ENCODE measurements at regions of chr3 and their contacts with region 1.

Region 1: DNA sequence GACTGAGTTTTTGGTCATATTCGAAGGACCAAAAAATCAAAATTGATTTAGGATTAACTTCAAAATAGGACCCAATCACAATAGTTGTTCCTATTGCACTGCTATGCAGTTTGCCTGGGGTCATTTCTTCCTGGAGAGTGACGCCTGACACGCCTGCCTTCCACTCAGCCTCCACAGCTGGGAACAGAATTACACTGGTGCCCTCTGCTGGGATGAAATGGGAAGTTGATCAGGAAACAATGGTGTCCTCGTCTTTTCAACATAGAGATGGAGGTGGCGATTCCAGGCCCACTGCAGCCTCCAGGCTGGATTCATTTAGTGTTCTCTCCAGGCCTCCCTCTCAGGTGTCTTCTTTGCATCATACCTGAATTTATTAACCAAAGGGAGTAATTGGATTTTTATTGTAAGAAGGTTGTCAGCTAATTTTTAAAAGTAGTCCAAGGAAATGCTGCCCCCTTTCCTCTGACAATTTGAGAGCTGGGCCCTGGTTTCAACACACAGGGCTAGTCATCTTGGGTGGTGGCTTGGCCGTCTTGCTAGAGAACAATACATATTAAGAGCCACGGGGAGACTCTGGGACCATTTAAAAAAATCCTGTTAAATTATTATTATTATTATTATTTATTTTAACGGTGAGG is 69.7 kb downstream of the GAP43 start:
- DNase-seq: peak; percentile 92
- H3K4me3 ChIP-seq: no peak overlapping the region
- H3K27ac ChIP-seq: no peak overlapping the region
- H3K4me1 ChIP-seq: peaks cover 4% of the 10 kb centered on the region
- H3K27me3 ChIP-seq: no peaks in the 10 kb centered on the region
- CTCF ChIP-seq: peak; percentile 85

Region 2: GRCh38 chr3:114827495-114827894 is 865.5 kb before region 1 on chr3:
- CTCF ChIA-PET with region 1: no interaction called
- POLR2A ChIA-PET with region 1: no interaction called
- intact Hi-C with region 1: loop called (anchors 5 kb)
- DNase-seq: peak; percentile 61
- H3K4me3 ChIP-seq: no peak overlapping the region
- H3K27ac ChIP-seq: no peak overlapping the region
- H3K4me1 ChIP-seq: no peaks in the 10 kb centered on the region
- H3K27me3 ChIP-seq: no peaks in the 10 kb centered on the region
- CTCF ChIP-seq: peak; percentile 64

Region 3: GRCh38 chr3:115120597-115120996 is 572.4 kb before region 1 on chr3:
- CTCF ChIA-PET with region 1: no interaction called
- POLR2A ChIA-PET with region 1: no interaction called
- intact Hi-C with region 1: no loop called
- DNase-seq: no peak
- H3K4me3 ChIP-seq: no peak overlapping the region
- H3K27ac ChIP-seq: no peak overlapping the region
- H3K4me1 ChIP-seq: no peaks in the 10 kb centered on the region
- H3K27me3 ChIP-seq: no peaks in the 10 kb centered on the region
- CTCF ChIP-seq: no peak

Region 4: DNA sequence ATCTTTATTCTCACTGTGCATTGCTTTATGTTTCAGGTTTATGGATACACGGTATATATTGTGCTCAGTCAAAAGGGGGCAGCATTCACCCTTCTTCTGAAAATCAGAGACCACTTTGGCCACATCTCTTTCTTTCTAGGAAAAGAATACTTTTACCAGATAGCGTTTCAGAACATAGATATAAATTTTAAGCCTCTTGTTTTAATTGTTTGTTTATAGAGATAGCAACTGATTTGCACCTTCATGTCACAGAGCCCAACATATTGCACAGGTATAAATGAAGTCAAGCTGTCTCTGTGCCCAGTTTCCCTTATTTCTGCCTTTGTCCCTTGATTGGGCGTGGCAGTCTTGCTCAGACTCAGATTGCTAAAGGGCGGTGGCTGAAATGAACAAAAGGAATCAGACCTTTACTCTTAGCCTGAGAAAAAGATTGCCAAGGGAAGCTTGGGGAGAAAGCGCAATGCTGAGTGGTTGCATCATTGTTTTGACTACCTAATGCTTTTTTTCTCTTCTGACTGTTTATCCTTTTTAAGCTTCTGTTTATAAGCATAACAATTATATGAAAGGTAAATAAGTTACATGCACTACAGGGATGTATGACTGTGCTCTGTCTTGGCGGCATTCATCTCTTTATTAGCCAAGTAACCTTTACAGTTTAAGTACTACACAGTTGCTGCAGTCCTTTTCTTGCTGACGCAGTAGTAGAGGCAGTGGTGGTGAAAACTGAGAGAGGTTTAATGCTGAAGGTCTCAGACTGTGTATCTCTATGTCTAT is 475.1 kb before region 1 on chr3:
- CTCF ChIA-PET with region 1: interaction called, 3 read pairs
- POLR2A ChIA-PET with region 1: no interaction called
- intact Hi-C with region 1: loop called (anchors 1 kb)
- DNase-seq: peak; percentile 76
- H3K4me3 ChIP-seq: no peak overlapping the region
- H3K27ac ChIP-seq: no peak overlapping the region
- H3K4me1 ChIP-seq: no peaks in the 10 kb centered on the region
- H3K27me3 ChIP-seq: no peaks in the 10 kb centered on the region
- CTCF ChIP-seq: peak; percentile 84

Region 5: GRCh38 chr3:115581362-115582135 is 111.5 kb before region 1 on chr3:
- CTCF ChIA-PET with region 1: no interaction called
- POLR2A ChIA-PET with region 1: no interaction called
- intact Hi-C with region 1: loop called (anchors 2 kb)
- DNase-seq: peak; percentile 91
- H3K4me3 ChIP-seq: no peak overlapping the region
- H3K27ac ChIP-seq: peak overlapping the region; percentile 59
- H3K4me1 ChIP-seq: peaks cover 23% of the 10 kb centered on the region
- H3K27me3 ChIP-seq: no peaks in the 10 kb centered on the region
- CTCF ChIP-seq: no peak

Region 6: DNA sequence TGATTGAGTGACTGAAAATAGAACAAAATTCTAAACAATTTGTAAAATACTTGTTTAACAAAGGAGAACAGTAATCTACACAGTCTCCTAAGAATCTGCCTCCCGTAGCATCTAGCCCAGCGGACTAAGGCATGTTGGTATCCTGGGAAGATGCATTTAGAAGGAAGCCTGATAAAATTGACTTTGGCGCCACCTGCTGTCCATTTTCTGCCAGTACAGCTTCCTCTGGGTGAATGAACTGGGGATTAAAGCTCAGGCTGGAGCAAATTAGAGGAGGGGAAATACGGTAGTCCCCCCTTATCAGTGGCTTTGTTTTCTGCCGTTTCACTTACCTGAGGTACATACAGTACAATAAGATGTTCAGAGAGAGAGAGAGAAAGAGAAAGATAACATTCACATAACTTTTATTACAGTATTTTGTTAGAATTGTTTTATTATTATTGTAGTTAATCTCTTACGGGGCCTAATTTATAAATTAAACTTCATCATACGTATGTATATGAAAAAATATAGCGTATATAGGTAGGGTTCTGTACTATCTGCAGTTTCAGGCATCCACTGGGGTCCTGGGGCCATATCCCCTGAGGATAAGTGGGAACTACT is 121.9 kb after region 1 on chr3:
- CTCF ChIA-PET with region 1: no interaction called
- POLR2A ChIA-PET with region 1: no interaction called
- intact Hi-C with region 1: loop called (anchors 2 kb)
- DNase-seq: peak; percentile 88
- H3K4me3 ChIP-seq: no peak overlapping the region
- H3K27ac ChIP-seq: no peak overlapping the region
- H3K4me1 ChIP-seq: no peaks in the 10 kb centered on the region
- H3K27me3 ChIP-seq: no peaks in the 10 kb centered on the region
- CTCF ChIP-seq: peak; percentile 90

Region 7: GRCh38 chr3:115903843-115904242 is 210.8 kb after region 1 on chr3:
- CTCF ChIA-PET with region 1: no interaction called
- POLR2A ChIA-PET with region 1: no interaction called
- intact Hi-C with region 1: no loop called
- DNase-seq: no peak
- H3K4me3 ChIP-seq: no peak overlapping the region
- H3K27ac ChIP-seq: no peak overlapping the region
- H3K4me1 ChIP-seq: no peaks in the 10 kb centered on the region
- H3K27me3 ChIP-seq: no peaks in the 10 kb centered on the region
- CTCF ChIP-seq: no peak

Region 8: DNA sequence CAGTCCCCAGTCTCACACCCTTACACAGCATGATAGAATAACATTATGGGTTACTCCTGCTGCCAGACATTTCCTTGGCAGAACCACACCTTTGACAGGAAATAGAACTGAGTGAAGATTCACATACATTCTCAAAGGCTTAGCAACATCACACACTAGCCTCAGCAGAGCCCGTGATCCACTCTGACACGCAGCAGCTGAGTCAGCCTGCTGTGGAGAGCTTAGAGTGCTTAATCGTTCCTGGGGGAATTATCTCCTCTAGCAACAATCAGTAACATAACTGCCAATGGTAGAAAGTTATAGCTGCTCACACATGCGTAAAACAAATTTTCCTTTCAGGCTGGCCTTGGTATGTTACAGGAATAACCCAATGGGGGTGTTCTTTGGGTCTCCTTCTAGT is 312.4 kb after region 1 on chr3:
- CTCF ChIA-PET with region 1: no interaction called
- POLR2A ChIA-PET with region 1: no interaction called
- intact Hi-C with region 1: no loop called
- DNase-seq: peak; percentile 95
- H3K4me3 ChIP-seq: no peak overlapping the region
- H3K27ac ChIP-seq: peak overlapping the region; percentile 26
- H3K4me1 ChIP-seq: peaks cover 20% of the 10 kb centered on the region
- H3K27me3 ChIP-seq: no peaks in the 10 kb centered on the region
- CTCF ChIP-seq: no peak

Measured in A673 (cell line).